ENCODE measurements at regions of chr6 and their contacts with region 1.

Region 1: DNA sequence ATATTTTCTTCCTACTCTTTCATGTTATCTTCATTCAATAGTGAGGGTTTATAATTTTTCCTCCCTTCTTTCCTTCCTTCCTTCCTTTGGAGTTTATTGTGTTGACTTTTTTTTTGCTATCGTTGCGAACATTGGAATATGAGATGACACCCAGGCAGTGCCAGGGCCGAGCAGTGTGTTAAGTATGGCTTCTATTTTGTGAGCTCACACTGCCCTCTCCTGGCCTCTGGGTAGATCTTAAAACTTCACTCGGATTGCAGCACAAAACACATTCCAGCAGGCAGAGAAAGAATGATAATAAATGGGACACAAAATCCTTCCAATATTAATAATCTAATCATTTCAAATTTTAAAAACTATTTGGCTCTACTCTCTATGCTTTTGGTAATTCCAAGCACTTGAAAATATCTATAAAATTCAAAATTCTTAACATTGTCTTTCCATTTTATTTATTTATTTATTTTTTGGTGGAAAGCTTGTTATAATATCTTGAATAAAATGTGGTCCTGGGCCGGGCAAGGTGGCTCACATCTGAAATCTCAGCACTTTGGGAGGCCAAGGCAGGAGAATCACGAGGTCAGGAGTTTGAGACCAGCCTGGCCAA is 147.4 kb upstream of the OLIG3 start:
- DNase-seq: peak; percentile 49
- H3K4me3 Mint-ChIP-seq: no peak overlapping the region
- H3K27ac Mint-ChIP-seq: no peak overlapping the region
- H3K4me1 Mint-ChIP-seq: peaks cover 21% of the 10 kb centered on the region
- H3K27me3 Mint-ChIP-seq: peaks cover 3% of the 10 kb centered on the region

Region 2: DNA sequence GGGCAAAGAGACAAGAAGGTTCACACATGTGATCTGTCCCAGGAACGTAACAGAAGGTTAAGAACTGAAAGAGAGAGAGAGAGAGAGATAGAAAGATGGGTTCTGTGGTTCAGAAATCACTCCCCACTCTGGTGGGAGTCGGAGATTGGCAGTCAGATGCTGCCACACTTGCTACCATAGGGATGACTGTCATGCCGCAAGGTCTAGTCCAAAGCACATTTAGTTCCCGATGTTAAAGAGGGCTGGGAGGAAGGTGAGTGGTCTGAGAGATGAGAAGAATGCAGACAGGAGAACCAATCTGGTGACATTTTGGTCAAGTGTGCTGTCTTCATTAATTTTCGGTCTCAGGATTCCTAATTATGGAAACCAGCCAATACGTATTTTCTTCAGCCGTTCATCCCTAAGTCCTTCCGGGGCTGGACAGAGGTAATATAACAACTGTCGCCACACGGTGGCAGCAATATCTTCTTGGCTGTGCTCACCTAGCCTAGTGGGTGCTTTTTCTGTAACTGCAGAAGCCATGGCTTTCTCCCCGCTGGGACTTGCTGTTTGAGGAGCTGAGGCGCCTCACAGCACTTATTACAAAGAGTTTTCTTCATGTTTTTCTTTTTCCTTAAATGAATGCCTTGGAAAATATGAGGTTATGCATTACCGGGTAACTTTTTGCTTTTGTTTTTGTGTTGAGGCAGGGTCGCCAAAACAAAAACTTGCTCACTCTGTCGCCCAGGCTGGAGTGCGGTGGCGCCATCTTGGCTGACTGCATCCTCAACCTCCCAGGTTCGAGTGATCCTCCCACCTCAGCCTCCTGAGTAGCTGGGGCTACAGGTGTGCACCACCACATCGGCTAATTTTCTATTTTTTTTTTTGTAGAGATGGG is 673.5 kb before region 1 on chr6:
- intact Hi-C with region 1: loop called (anchors 1 kb)
- DNase-seq: peak; percentile 46
- H3K4me3 Mint-ChIP-seq: no peak overlapping the region
- H3K27ac Mint-ChIP-seq: no peak overlapping the region
- H3K4me1 Mint-ChIP-seq: peaks cover 9% of the 10 kb centered on the region
- H3K27me3 Mint-ChIP-seq: peaks cover 43% of the 10 kb centered on the region

Region 3: GRCh38 chr6:137155830-137156229 is 485.7 kb before region 1 on chr6:
- intact Hi-C with region 1: loop called (anchors 5 kb)
- DNase-seq: peak; percentile 63
- H3K4me3 Mint-ChIP-seq: peak overlapping the region; percentile 30
- H3K27ac Mint-ChIP-seq: peak overlapping the region; percentile 73
- H3K4me1 Mint-ChIP-seq: peaks cover 64% of the 10 kb centered on the region
- H3K27me3 Mint-ChIP-seq: peaks cover 9% of the 10 kb centered on the region

Region 4: GRCh38 chr6:137313928-137314855 is 327.4 kb before region 1 on chr6:
- intact Hi-C with region 1: loop called (anchors 1 kb)
- DNase-seq: peak; percentile 32
- H3K4me3 Mint-ChIP-seq: no peak overlapping the region
- H3K27ac Mint-ChIP-seq: no peak overlapping the region
- H3K4me1 Mint-ChIP-seq: peaks cover 9% of the 10 kb centered on the region
- H3K27me3 Mint-ChIP-seq: peaks cover 15% of the 10 kb centered on the region

Region 5: GRCh38 chr6:137415127-137415833 is 226.3 kb before region 1 on chr6:
- intact Hi-C with region 1: loop called (anchors 2 kb)
- DNase-seq: peak; percentile 57
- H3K4me3 Mint-ChIP-seq: peak overlapping the region; percentile 81
- H3K27ac Mint-ChIP-seq: peak overlapping the region; percentile 53
- H3K4me1 Mint-ChIP-seq: peaks cover 14% of the 10 kb centered on the region
- H3K27me3 Mint-ChIP-seq: peaks cover 23% of the 10 kb centered on the region

Region 6: GRCh38 chr6:137666202-137666774 is 24.7 kb after region 1 on chr6:
- intact Hi-C with region 1: no loop called
- DNase-seq: no peak
- H3K4me3 Mint-ChIP-seq: peak overlapping the region; percentile 35
- H3K27ac Mint-ChIP-seq: peak overlapping the region; percentile 37
- H3K4me1 Mint-ChIP-seq: peaks cover 40% of the 10 kb centered on the region
- H3K27me3 Mint-ChIP-seq: peaks cover 2% of the 10 kb centered on the region

Region 7: GRCh38 chr6:138161338-138162110 is 519.9 kb after region 1 on chr6 and contains the start of gene ARFGEF3:
- intact Hi-C with region 1: no loop called
- DNase-seq: peak; percentile 29
- H3K4me3 Mint-ChIP-seq: peak within 1 kb of the TSS; percentile 63
- H3K27ac Mint-ChIP-seq: no peak within 1 kb of the TSS
- H3K4me1 Mint-ChIP-seq: peaks cover 13% of the 10 kb centered on the region
- H3K27me3 Mint-ChIP-seq: peaks cover 54% of the 10 kb centered on the region
- total RNA-seq, gene ARFGEF3: 0.22 and 0.29 TPM in 2 replicates

Region 8: GRCh38 chr6:138970856-138971425 is 1329.4 kb after region 1 on chr6:
- intact Hi-C with region 1: no loop called
- DNase-seq: no peak
- H3K4me3 Mint-ChIP-seq: no peak overlapping the region
- H3K27ac Mint-ChIP-seq: no peak overlapping the region
- H3K4me1 Mint-ChIP-seq: peaks cover 56% of the 10 kb centered on the region
- H3K27me3 Mint-ChIP-seq: no peaks in the 10 kb centered on the region

Measured in activated T-helper 1 cell treated with anti-CD3 and anti-CD28 coated beads, Interleukin-12 subunit alpha, Interleukin-12 subunit beta, Interleukin-2, Interleukin-4 antibody, amounts not matched to agents 30 ng/mL and 10 ng/mL and 1 ng/mL, durations not matched to agents 14 hours and 24 hours and 36 hours (primary cell).